ENCODE measurements at regions of chr5 and their contacts with region 1.

Region 1: DNA sequence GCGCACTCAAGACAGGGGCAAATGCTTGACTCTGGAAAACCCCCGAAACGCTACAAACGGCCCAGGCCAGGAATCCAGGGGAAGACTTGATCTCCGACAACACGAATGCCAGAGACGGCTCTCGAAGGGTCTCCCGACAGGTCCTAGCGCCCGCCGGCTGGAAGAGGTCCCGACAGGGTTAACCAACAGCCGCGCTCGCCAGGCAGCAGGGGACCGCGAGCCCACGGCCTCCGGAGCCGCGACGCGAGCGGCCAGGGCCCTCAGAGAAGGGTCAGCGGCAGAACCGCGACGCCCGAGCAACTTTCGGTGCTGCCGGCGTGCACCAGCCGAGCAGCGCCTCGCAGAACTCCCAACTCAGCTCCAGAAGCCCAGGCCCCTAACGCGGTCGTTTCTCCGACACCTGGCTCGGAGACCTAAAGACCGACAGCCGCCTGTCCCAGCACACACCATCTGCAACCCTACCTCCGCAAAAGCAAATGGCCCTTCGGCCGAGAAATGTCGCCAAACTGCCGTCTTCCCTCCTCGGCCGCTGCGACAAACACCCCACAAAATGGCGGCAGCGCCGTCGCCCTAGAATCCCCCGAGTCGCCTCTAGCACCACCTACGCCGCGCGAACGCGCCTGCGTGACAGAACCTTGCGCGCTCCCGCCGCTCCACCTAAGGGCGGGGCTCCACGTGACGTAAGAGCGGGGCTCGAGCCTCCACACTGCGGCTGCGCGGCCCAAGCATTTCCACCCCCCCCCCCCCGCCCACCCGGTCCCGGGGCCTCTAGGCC is at the start of gene CLK4:
- DNase-seq: peak; percentile 97
- ATAC-seq: peak; percentile 85
- H3K4me3 Mint-ChIP-seq: peak within 1 kb of the TSS; percentile 98
- H3K27ac Mint-ChIP-seq: peak within 1 kb of the TSS; percentile 98
- H3K4me1 Mint-ChIP-seq: peaks cover 59% of the 10 kb centered on the region
- H3K27me3 Mint-ChIP-seq: no peaks in the 10 kb centered on the region
- CTCF ChIP-seq: no peak
- total RNA-seq, gene CLK4: 62.4 and 65.3 TPM in 2 replicates

Region 2: DNA sequence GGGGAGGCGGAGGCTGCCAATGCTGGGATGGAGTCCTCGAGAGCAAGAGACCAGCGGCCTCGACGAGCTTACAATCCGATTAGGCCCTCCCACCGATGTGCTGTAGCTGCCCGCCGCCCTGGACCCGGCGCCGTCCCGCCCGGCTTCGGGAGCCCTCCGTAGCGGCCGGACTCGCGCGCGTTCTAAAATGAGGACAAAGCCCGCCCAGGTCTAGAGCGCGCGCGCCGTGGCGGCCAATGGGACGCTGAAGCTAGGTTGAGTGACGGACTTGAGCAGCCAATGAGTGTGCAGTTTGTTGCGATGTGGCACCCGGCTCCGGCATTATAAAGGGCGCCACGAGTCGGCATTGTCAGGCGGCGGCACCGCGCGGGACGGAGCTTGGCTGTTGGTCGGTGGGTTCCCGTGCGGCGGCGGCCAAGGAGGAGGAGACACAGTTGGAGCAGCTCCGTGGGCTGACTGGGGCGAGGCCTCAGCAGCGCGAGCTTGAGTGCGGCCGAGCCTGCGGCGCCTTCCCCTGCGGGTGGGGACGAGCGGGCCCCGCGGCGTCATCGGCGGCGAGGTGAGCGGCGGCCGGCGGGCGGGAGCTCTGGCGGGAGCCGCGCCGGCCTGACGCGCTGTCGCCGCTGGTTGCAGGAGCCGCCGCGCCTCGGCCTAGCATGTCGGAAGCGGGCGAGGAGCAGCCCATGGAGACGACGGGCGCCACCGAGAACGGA is 422.3 kb before region 1 on chr5 and contains the start of gene HNRNPAB:
- CTCF ChIA-PET with region 1: no interaction called
- POLR2A ChIA-PET with region 1: interaction called, 5 read pairs
- intact Hi-C with region 1: loop called (anchors 10 kb)
- DNase-seq: peak; percentile 95
- ATAC-seq: peak; percentile 80
- H3K4me3 Mint-ChIP-seq: peak within 1 kb of the TSS; percentile 95
- H3K27ac Mint-ChIP-seq: peak within 1 kb of the TSS; percentile 95
- H3K4me1 Mint-ChIP-seq: peaks cover 28% of the 10 kb centered on the region
- H3K27me3 Mint-ChIP-seq: no peaks in the 10 kb centered on the region
- CTCF ChIP-seq: no peak
- total RNA-seq, gene HNRNPAB: 118 and 120 TPM in 2 replicates

Region 3: GRCh38 chr5:178637356-178638074 is 10.8 kb after region 1 on chr5:
- CTCF ChIA-PET with region 1: interaction called, 3 read pairs
- POLR2A ChIA-PET with region 1: interaction called, 27 read pairs
- intact Hi-C with region 1: no loop called
- DNase-seq: no peak
- ATAC-seq: peak; percentile 92
- H3K4me3 Mint-ChIP-seq: peak overlapping the region; percentile 36
- H3K27ac Mint-ChIP-seq: peak overlapping the region; percentile 72
- H3K4me1 Mint-ChIP-seq: peaks cover 14% of the 10 kb centered on the region
- H3K27me3 Mint-ChIP-seq: no peaks in the 10 kb centered on the region
- CTCF ChIP-seq: no peak

Region 4: DNA sequence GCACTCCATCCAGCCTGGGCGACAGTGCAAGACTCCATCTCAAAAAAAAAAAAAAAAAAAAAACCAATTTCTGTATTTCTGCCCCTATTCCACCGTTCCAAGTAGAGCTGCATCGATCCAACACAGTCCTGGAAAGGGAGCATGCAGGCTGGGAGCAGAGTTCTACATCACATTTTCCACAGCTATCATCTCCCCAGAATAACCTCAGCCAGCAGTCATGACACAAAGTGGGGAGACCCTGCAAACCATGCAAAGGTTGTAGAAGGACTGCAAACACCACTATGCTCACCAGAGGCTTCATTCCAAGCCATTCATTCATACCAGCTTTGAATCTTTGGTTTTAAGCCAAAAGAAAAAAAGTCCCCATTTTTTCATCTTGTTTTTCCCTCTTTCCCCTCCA is 124.6 kb after region 1 on chr5:
- CTCF ChIA-PET with region 1: no interaction called
- POLR2A ChIA-PET with region 1: no interaction called
- intact Hi-C with region 1: no loop called
- DNase-seq: no peak
- ATAC-seq: no peak
- H3K4me3 Mint-ChIP-seq: no peak overlapping the region
- H3K27ac Mint-ChIP-seq: no peak overlapping the region
- H3K4me1 Mint-ChIP-seq: no peaks in the 10 kb centered on the region
- H3K27me3 Mint-ChIP-seq: peaks cover 8% of the 10 kb centered on the region
- CTCF ChIP-seq: no peak

Region 5: DNA sequence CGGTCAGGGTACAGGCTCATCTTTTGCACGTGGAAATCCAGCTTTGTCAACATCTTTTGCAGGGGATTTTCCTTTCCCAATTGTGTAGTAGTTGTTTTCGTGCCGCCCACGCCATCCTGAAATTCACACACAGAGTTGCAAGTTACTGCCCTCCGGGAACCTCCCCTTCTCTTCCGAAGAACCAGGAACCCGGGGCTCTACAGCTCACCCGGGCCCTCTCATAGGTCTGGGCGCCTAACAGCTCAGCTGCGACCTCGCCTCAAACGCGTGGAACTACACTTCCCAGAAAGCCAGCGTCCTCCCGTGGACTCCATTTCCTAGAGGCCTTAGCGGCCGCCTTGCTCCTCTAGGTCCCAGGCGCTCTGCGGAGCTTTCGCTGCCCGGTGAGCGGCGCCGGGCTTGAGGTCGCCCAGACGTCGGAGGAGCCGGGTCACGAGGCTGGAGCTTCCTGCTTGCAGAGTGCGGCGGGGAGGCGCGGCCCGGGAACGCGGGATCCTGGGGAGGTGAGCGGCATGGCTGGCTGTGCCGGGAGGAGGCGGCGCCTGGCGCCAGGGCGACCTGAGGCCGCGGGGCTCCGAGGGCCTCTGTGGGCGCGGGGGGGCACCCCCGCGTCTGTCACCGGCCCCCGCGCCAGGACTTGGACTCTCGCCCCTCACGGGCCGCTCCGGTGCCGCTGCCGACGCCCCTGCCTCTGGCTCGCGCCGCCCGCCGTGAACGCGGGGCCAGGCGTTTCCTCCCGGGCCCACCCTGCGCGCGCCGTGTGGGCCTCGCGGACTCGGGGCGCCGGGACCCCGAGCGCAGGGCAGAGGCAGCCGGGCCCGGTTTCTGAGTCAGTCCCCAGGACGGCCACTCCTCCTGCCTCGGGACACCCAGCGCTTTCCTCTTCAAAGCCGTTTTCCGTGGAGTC is 233.2 kb after region 1 on chr5 and contains the start of gene ZNF354B:
- CTCF ChIA-PET with region 1: no interaction called
- POLR2A ChIA-PET with region 1: interaction called, 7 read pairs
- intact Hi-C with region 1: loop called (anchors 2 kb)
- DNase-seq: peak; percentile 73
- ATAC-seq: peak; percentile 99
- H3K4me3 Mint-ChIP-seq: peak within 1 kb of the TSS; percentile 89
- H3K27ac Mint-ChIP-seq: peak within 1 kb of the TSS; percentile 82
- H3K4me1 Mint-ChIP-seq: peaks cover 19% of the 10 kb centered on the region
- H3K27me3 Mint-ChIP-seq: no peaks in the 10 kb centered on the region
- CTCF ChIP-seq: no peak
- total RNA-seq, gene ZNF354B: 17.5 and 20.0 TPM in 2 replicates

Region 6: DNA sequence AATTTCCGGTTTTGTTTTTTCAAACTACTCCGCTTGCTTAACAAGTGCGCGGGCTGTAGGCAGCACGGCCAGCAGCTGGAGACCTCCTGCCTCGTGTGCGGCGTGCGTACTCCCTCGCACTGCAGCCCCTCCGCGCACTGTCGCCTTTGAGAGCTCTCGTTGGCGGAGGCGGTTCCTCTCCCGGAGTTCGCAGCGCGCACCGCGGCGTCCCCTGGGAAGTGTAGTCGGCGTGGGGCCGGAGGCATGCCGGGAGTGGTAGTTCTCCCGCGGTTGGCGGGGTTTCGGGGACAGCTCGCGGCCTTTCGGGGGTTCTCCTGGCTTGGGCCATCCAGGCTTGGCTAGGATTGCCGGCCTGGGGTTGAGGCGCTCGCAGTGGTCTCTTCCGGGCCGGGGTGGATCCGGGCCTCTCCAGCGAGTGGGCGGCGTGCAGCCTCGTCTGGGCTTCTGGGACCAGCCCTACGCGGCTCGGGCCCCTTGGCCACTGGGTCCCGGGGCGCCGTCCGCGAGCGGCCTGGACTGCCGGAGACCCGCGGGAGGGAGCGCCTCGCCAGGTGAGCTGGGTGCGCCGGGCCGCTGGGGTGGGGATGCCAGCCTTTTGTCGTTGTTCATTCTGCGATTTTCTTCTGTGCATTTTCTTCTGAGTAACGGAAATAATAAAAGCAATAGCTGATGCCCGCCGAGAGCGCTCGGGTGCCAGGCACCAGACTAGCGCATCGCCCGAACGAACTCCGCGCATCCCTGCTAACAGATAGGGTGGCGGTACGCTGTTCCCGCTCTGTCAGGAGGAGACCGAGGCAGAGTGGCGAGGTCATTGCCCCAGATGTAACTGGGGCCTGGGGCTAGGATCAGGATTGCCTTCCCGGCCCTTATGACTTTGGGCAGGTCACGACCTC is 433.7 kb after region 1 on chr5 and contains the start of gene ZNF354C:
- CTCF ChIA-PET with region 1: no interaction called
- POLR2A ChIA-PET with region 1: no interaction called
- intact Hi-C with region 1: loop called (anchors 5 kb)
- DNase-seq: peak; percentile 80
- ATAC-seq: peak; percentile 97
- H3K4me3 Mint-ChIP-seq: peak within 1 kb of the TSS; percentile 92
- H3K27ac Mint-ChIP-seq: peak within 1 kb of the TSS; percentile 86
- H3K4me1 Mint-ChIP-seq: peaks cover 20% of the 10 kb centered on the region
- H3K27me3 Mint-ChIP-seq: no peaks in the 10 kb centered on the region
- CTCF ChIP-seq: no peak
- total RNA-seq, gene ZNF354C: 6.3 and 7.1 TPM in 2 replicates

Region 7: DNA sequence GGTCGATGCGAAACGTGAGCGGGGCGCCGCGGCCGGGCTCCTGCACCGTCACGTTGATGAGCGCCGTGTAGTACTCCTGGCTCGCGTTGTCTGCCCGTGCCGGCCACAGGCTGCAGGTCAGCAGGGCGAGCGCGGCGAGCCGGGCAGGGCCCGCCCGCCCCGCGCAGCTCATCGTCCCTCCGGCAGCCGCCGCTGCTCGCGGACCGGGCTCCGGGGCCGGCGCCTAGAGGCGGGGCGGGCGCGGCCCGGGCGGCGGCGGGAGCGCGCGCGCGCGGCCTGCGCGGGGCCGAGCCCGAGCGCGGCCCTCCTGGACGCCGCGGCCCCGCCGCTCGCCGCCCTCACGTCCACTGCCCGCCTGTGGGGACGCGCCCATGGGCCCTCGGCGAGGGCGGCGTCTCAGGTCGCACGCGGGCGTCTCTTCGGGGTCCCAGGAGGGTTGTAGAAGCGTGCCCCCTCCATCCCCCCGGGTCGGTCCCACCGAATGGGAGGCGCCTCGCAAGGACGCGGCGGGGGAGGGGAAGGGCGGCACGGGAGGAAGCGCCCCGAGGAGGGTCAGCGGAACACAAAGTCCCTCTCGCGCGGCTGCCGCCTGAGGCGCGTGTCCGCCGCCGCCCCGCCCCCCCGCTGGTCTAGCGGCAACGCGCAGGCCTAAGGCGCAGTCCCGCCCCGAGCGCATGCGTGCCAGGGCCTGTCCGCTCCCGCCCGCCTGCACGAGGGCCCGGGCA is 1445.0 kb after region 1 on chr5 and contains the start of gene RNF130:
- CTCF ChIA-PET with region 1: no interaction called
- POLR2A ChIA-PET with region 1: no interaction called
- intact Hi-C with region 1: loop called (anchors 5 kb)
- DNase-seq: peak; percentile 91
- ATAC-seq: peak; percentile 83
- H3K4me3 Mint-ChIP-seq: peak within 1 kb of the TSS; percentile 89
- H3K27ac Mint-ChIP-seq: peak within 1 kb of the TSS; percentile 84
- H3K4me1 Mint-ChIP-seq: peaks cover 28% of the 10 kb centered on the region
- H3K27me3 Mint-ChIP-seq: peaks cover 2% of the 10 kb centered on the region
- CTCF ChIP-seq: no peak
- total RNA-seq, gene RNF130: 17.6 and 18.5 TPM in 2 replicates